ENCODE measurements at regions of chrX and their contacts with region 1.

Region 1: GRCh38 chrX:20530406-20530921 is 263.8 kb upstream of the RPS6KA3 start:
- DNase-seq: peak; percentile 16 to 70
- ATAC-seq: peak in 2 of 3 donors; percentile 54 to 61
- H3K4me3 ChIP-seq: no peak overlapping the region
- H3K4me3 Mint-ChIP-seq: no peak overlapping the region
- H3K27ac ChIP-seq: no peak overlapping the region
- H3K27ac Mint-ChIP-seq: no peak overlapping the region
- H3K4me1 ChIP-seq: no peaks in the 10 kb centered on the region
- H3K4me1 Mint-ChIP-seq: no peaks in the 10 kb centered on the region
- H3K27me3 ChIP-seq: peaks cover 5% of the 10 kb centered on the region
- H3K27me3 Mint-ChIP-seq: peaks cover 36 to 62% of the 10 kb centered on the region in 2 donors
- CTCF ChIP-seq: peak; percentile 69

Region 2: GRCh38 chrX:21479695-21480270 is 949.3 kb after region 1 on chrX:
- intact Hi-C with region 1: loop called (anchors 1 kb)
- DNase-seq: peak in 1 of 2 donors; percentile 63
- ATAC-seq: peak in 2 of 3 donors; percentile 37 to 50
- H3K4me3 ChIP-seq: no peak overlapping the region
- H3K4me3 Mint-ChIP-seq: no peak overlapping the region
- H3K27ac ChIP-seq: no peak overlapping the region
- H3K27ac Mint-ChIP-seq: no peak overlapping the region
- H3K4me1 ChIP-seq: no peaks in the 10 kb centered on the region
- H3K4me1 Mint-ChIP-seq: no peaks in the 10 kb centered on the region
- H3K27me3 ChIP-seq: no peaks in the 10 kb centered on the region
- H3K27me3 Mint-ChIP-seq: no peaks in the 10 kb centered on the region
- CTCF ChIP-seq: peak; percentile 27

Region 3: GRCh38 chrX:21745756-21746155 is 1215.3 kb after region 1 on chrX:
- intact Hi-C with region 1: loop called (anchors 1 kb)
- DNase-seq: peak in 1 of 2 donors; percentile 43
- ATAC-seq: no peak
- H3K4me3 ChIP-seq: no peak overlapping the region
- H3K4me3 Mint-ChIP-seq: no peak overlapping the region
- H3K27ac ChIP-seq: no peak overlapping the region
- H3K27ac Mint-ChIP-seq: no peak overlapping the region
- H3K4me1 ChIP-seq: no peaks in the 10 kb centered on the region
- H3K4me1 Mint-ChIP-seq: no peaks in the 10 kb centered on the region
- H3K27me3 ChIP-seq: no peaks in the 10 kb centered on the region
- H3K27me3 Mint-ChIP-seq: peaks cover 9 to 37% of the 10 kb centered on the region in 2 donors
- CTCF ChIP-seq: peak; percentile 31

Region 4: DNA sequence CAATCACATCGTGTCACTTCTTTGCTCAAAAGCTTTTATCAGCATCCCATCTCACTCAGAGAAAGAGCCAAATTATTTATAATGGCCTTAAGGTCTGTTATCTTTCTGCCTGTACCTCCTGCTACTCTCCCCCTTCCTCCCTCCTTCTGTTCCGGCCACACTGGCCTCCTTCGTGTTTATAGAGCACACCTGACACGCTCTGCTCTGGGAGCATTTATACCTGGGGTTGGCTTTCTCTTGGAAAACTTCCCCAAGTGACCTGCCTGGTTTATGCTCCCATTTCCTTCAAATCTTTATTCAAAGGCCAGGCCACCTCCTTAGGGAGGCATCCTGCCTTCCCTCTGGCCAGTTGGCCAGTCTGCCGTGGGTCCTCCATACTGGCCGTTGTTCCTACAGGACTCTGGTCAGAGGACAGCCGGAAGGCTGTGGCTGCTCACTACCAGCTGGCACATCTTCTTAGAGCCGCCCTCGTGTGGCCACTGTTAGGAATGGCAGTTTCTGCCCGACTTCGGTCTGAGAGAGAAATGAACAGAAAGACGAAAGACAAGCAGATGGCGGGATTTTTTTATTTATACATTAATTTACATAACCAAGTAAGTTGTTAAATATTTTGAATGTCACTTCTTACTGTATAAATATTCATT is 1662.1 kb after region 1 on chrX:
- intact Hi-C with region 1: loop called (anchors 5 kb)
- DNase-seq: peak; percentile 19 to 60
- ATAC-seq: peak; percentile 50 to 83 (median 64)
- H3K4me3 ChIP-seq: no peak overlapping the region
- H3K4me3 Mint-ChIP-seq: no peak overlapping the region
- H3K27ac ChIP-seq: no peak overlapping the region
- H3K27ac Mint-ChIP-seq: no peak overlapping the region
- H3K4me1 ChIP-seq: peaks cover 4% of the 10 kb centered on the region
- H3K4me1 Mint-ChIP-seq: peaks cover 5% of the 10 kb centered on the region in 2 donors
- H3K27me3 ChIP-seq: peaks cover 2% of the 10 kb centered on the region
- H3K27me3 Mint-ChIP-seq: peaks cover 3 to 6% of the 10 kb centered on the region in 2 donors
- CTCF ChIP-seq: peak; percentile 63

Measured in natural killer cell (primary cell).